HEK293T (cell line): ENCODE measurements at regions of chr1 and their contacts with region 1.

Region 1: GRCh38 chr1:150363426-150364230 is at the start of gene RPRD2:
- DNase-seq: peak; percentile 98

Region 2: DNA sequence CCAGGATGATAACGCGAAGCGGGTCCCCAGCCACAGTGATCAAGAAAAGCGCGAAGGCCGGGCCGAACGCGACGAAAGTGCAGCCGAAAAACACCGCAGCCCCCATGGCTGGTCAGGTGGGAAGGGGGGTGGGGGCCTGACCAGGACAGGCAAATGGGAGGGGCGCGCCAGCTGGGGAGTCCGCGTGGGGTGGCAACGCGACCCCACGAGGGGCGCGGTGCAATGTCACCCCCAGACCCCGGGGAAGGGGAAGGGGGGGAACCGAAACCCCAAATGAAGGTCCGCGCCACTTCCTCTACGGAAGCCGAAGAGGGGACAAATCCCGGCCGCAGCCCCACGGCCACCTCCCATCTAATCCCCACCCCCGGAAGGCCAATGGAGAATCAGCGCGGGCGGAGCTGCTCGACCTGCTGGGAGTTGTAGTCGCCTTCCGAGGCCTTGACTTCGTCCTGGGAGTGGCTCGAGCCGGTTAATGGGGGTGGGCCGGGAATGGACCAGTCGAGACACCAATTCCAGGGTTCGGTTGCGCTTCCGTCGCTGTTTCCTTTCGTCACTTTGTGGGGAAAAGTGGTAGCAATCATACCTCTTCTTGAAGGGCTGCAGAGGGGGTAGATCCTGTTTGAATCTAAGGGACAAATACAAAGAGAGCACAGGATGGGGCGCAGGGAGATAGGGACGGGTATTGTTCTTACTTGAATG is 94.8 kb before region 1 on chr1 and contains the start of gene APH1A:
- CTCF ChIA-PET with region 1: no interaction called
- POLR2A ChIA-PET with region 1: interaction called, 10 read pairs
- DNase-seq: peak; percentile 99

Region 3: GRCh38 chr1:150376110-150376509 is 12.5 kb after region 1 on chr1:
- CTCF ChIA-PET with region 1: no interaction called
- POLR2A ChIA-PET with region 1: interaction called, 14 read pairs
- DNase-seq: no peak

Region 4: DNA sequence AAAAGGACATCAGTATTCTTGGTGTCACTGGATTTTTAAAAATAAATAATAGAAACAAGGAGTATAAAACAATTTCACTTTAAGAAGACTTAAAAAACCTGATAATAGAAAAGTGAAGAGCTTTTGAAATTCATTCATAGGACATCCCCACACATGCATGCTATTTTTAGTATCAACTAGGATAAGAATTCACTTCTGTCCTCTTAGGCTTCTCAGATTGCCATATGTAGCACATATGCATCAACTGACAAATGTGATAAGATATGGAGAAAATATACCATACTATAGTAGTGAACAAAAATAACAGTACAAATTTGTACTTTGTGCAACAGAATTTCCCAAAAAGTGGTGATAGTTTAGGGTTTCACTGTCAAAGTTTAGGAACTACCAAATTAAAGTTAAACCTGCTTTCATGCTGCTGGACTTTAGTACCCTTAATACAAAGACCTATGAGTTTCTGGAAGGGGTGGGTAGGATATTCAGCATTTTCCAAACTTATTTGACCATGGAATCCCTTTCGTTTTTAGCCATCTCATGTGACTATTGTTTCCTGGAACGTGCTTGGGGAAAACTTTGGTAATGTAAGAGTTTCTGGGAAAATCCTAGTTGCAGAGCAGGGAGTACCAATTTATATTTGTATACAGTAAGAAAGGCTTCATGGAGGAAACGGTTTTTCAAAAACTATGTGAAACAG is 20.1 kb after region 1 on chr1:
- CTCF ChIA-PET with region 1: no interaction called
- POLR2A ChIA-PET with region 1: interaction called, 11 read pairs
- DNase-seq: no peak

Region 5: GRCh38 chr1:150389650-150390049 is 26.0 kb after region 1 on chr1:
- CTCF ChIA-PET with region 1: no interaction called
- POLR2A ChIA-PET with region 1: interaction called, 10 read pairs
- DNase-seq: no peak

Region 6: GRCh38 chr1:150486964-150487762 is 123.5 kb after region 1 on chr1 and contains the start of gene TARS2:
- CTCF ChIA-PET with region 1: interaction called, 5 read pairs
- POLR2A ChIA-PET with region 1: interaction called, 12 read pairs
- DNase-seq: peak; percentile 100